ENCODE measurements at regions of chr6 and their contacts with region 1.

Region 1: GRCh38 chr6:77492530-77492929 is 29.2 kb upstream of the HTR1B start:
- DNase-seq: peak; percentile 43
- ATAC-seq: peak; percentile 53
- H3K4me3 ChIP-seq: no peak overlapping the region
- H3K27ac ChIP-seq: no peak overlapping the region
- H3K4me1 ChIP-seq: no peaks in the 10 kb centered on the region; the same call in 1 of the 2 replicates
- H3K27me3 ChIP-seq: no peaks in the 10 kb centered on the region
- CTCF ChIP-seq: no peak

Region 2: GRCh38 chr6:77466055-77466450 is 26.5 kb before region 1 on chr6:
- CTCF ChIA-PET with region 1: no interaction called
- POLR2A ChIA-PET with region 1: no interaction called
- intact Hi-C with region 1: no loop called
- DNase-seq: peak; percentile 32
- ATAC-seq: peak; percentile 64
- H3K4me3 ChIP-seq: peak overlapping the region; percentile 37; the same call in 1 of the 2 replicates
- H3K27ac ChIP-seq: no peak overlapping the region
- H3K4me1 ChIP-seq: no peaks in the 10 kb centered on the region
- H3K27me3 ChIP-seq: no peaks in the 10 kb centered on the region
- CTCF ChIP-seq: peak; percentile 56

Region 3: DNA sequence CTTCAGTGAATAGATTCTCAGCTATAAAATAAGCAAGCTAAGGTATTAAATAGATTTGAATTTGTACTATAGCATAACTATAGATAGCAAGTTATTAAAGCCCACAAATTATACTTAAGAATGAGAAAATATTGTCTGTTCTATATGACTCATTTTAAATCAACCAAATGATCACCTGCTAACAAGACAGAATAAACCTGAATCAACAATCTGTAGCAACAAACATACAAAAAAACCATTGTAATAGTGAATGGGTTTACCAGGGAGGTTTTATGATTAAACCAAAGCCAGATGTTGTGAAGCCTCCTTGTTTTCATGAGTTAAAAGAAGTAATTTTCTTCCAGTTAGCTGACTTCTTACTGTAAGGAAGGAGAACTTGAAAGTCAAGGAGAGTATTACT is 42.6 kb after region 1 on chr6:
- CTCF ChIA-PET with region 1: no interaction called
- POLR2A ChIA-PET with region 1: no interaction called
- intact Hi-C with region 1: loop called (anchors 2 kb)
- DNase-seq: peak; percentile 39
- ATAC-seq: peak; percentile 60
- H3K4me3 ChIP-seq: no peak overlapping the region
- H3K27ac ChIP-seq: no peak overlapping the region
- H3K4me1 ChIP-seq: no peaks in the 10 kb centered on the region
- H3K27me3 ChIP-seq: no peaks in the 10 kb centered on the region
- CTCF ChIP-seq: no peak